Aorta (tissue), 5 donors: ENCODE measurements at regions of chr6 and their contacts with region 1.

Region 1: GRCh38 chr6:39812853-39813533 is 20.8 kb downstream of the DAAM2 start:
- DNase-seq: no peak
- ATAC-seq: peak; percentile 43
- H3K4me3 ChIP-seq: no peak overlapping the region
- H3K27ac ChIP-seq: peak overlapping the region; percentile 61 to 83
- H3K4me1 ChIP-seq: peaks cover 10 to 19% of the 10 kb centered on the region in 2 donors
- H3K27me3 ChIP-seq: no peaks in the 10 kb centered on the region

Region 2: GRCh38 chr6:39753725-39754045 is 59.3 kb before region 1 on chr6:
- intact Hi-C with region 1: no loop called
- DNase-seq: no peak
- ATAC-seq: peak; percentile 90
- H3K4me3 ChIP-seq: no peak overlapping the region
- H3K27ac ChIP-seq: peak overlapping the region; percentile 15 to 74
- H3K4me1 ChIP-seq: peaks cover 2 to 6% of the 10 kb centered on the region in 2 donors
- H3K27me3 ChIP-seq: no peaks in the 10 kb centered on the region

Region 3: GRCh38 chr6:39850736-39851297 is 37.8 kb after region 1 on chr6:
- intact Hi-C with region 1: loop called (anchors 5 kb)
- DNase-seq: no peak
- ATAC-seq: no peak
- H3K4me3 ChIP-seq: no peak overlapping the region
- H3K27ac ChIP-seq: no peak overlapping the region
- H3K4me1 ChIP-seq: peaks cover 9 to 13% of the 10 kb centered on the region in 2 donors
- H3K27me3 ChIP-seq: no peaks in the 10 kb centered on the region